ENCODE measurements at regions of chr3 and their contacts with region 1.

Region 1: GRCh38 chr3:119279101-119279554 is 15.1 kb upstream of the ARHGAP31 start:
- DNase-seq: peak; percentile 58 to 83
- H3K4me3 ChIP-seq: no peak overlapping the region
- H3K27ac ChIP-seq: peak overlapping the region; percentile 29 to 30
- H3K4me1 ChIP-seq: peaks cover 0 to 7% (median 0%) of the 10 kb centered on the region in 4 donors
- H3K27me3 ChIP-seq: no peaks in the 10 kb centered on the region
- CTCF ChIP-seq: no peak

Region 2: DNA sequence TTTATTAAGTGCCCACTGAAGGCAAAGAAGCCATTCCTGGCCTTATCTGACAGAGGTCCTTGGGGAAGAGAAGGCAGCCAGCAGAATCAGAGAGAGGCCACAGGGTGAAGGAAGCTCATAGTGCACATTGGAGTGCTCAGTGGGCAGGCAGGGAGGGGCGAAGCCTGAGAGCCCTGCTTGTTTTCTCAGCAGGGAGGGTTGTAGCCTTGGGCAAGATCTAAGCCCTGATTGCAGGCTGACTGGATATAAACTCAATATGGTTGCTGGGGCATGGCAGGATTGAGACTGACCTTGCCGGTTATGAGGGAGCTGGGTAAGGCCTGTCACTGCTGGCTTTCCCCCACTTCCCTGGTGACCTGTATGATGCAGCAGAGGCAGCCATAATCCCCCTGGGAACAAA is 237.0 kb before region 1 on chr3:
- intact Hi-C with region 1: no loop called
- DNase-seq: no peak
- H3K4me3 ChIP-seq: no peak overlapping the region
- H3K27ac ChIP-seq: no peak overlapping the region
- H3K4me1 ChIP-seq: no peaks in the 10 kb centered on the region
- H3K27me3 ChIP-seq: peaks cover 0 to 3% of the 10 kb centered on the region in 2 donors
- CTCF ChIP-seq: no peak

Region 3: GRCh38 chr3:119469381-119470189 is 190.5 kb after region 1 on chr3:
- intact Hi-C with region 1: loop called (anchors 5 kb)
- DNase-seq: no peak
- H3K4me3 ChIP-seq: peak overlapping the region; percentile 77 to 83
- H3K27ac ChIP-seq: peak overlapping the region; percentile 69 to 71
- H3K4me1 ChIP-seq: peaks cover 0 to 24% (median 9%) of the 10 kb centered on the region in 4 donors
- H3K27me3 ChIP-seq: no peaks in the 10 kb centered on the region
- CTCF ChIP-seq: no peak

Measured in tibial artery (tissue), 4 donors.